ENCODE measurements at regions of chr1 and their contacts with region 1.

Region 1: DNA sequence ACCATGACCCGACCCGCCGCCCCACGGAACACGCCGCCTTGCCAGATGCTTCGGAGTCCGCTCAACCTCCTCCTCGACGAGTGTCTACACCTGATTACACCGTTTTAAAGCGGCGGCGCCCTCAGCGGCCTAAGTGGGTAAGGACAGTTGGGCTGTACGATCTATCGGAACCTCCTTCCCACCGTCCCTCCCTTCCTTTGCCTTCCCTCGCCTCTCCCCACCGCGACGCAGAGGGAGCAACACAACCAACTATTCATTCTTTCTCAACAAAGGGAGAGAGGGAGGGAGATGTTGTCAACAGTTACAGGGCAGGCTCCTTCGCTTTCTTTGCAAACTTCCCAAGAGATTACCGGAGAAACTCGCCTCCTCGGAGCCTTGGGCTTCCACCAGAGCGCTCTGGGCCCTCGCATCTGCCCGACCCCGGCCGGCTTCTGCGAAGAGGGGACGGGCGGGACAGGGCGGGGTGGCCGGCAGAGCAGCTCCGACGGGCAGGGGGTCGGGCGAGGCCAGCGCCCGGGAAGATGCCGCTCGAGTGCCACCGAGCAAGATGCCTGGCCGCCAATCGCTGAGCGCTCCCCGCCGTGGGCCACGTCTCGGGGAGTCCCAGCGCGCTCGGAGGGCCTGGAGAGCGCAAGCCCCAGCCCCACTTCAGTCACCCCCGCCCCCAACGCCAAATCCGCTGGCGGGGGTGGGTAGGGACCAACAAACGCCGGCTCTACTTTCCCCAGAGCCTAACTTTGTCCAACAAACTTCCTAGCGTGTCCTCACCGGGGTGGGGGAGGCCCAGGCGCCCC is 683 bp downstream of the BCAR3 start:
- DNase-seq: peak; percentile 72
- ATAC-seq: peak; percentile 92
- H3K4me3 ChIP-seq: peak overlapping the region; percentile 74 to 84 (median 76)
- H3K27ac ChIP-seq: peak overlapping the region; percentile 47
- H3K4me1 ChIP-seq: peaks cover 48% of the 10 kb centered on the region
- H3K27me3 ChIP-seq: no peaks in the 10 kb centered on the region
- CTCF ChIP-seq: peak; percentile 85
- EP300 ChIP-seq: no peak
- POLR2A ChIP-seq: no peak
- RAD21 ChIP-seq: peak; percentile 46; the same call in 1 of the 2 replicates

Region 2: DNA sequence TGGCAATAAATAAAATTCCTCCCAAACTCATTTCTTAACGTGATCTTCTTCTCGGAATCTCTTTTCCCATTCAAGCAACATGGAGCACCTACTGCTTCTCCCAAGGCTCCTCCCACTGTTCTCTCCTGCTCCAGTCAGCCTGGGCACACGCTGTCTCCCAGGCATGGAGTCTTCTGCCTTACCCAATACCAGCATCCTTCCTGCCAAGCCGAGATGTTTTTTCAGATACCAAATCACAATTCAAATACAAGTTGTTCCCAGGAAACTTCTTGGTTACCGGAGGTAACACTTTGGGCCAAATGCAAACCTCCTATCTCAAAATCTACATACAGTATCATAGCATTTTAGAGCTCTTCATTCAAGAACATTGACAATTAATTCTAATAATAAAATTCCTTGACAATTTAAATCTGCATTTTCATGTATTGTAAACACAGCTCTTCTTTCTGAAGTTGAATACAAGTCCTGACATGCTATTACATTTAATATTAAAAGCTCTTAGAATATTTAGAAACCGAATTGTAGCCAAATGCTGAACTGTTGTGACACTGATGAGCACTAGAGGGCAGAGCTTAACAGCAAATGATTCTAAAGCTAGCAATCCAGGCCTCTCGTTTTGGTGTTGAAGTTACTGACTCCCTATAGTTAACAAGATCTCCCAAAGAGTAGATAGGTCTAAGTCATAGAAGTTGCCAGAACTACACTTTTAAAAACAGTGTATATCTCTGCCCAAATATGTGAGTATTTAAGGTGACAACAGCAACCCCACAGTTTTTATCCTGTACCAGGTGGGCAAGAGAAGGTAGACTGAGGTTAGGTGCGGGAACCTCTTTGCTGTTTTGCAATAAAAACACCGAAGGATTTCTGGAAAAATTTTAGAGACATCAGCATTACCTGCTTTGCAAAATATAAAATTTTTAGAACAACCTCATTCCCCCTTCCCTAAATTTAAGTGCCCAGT is 51.6 kb before region 1 on chr1:
- CTCF ChIA-PET with region 1: interaction called, 9 read pairs
- POLR2A ChIA-PET with region 1: no interaction called
- in situ Hi-C with region 1: no loop called
- intact Hi-C with region 1: loop called (anchors 1 kb)
- DNase-seq: peak; percentile 65
- ATAC-seq: peak; percentile 71
- H3K4me3 ChIP-seq: no peak overlapping the region
- H3K27ac ChIP-seq: no peak overlapping the region
- H3K4me1 ChIP-seq: peaks cover 26% of the 10 kb centered on the region
- H3K27me3 ChIP-seq: no peaks in the 10 kb centered on the region
- CTCF ChIP-seq: peak; percentile 84
- EP300 ChIP-seq: no peak
- POLR2A ChIP-seq: no peak
- RAD21 ChIP-seq: peak; percentile 89

Region 3: DNA sequence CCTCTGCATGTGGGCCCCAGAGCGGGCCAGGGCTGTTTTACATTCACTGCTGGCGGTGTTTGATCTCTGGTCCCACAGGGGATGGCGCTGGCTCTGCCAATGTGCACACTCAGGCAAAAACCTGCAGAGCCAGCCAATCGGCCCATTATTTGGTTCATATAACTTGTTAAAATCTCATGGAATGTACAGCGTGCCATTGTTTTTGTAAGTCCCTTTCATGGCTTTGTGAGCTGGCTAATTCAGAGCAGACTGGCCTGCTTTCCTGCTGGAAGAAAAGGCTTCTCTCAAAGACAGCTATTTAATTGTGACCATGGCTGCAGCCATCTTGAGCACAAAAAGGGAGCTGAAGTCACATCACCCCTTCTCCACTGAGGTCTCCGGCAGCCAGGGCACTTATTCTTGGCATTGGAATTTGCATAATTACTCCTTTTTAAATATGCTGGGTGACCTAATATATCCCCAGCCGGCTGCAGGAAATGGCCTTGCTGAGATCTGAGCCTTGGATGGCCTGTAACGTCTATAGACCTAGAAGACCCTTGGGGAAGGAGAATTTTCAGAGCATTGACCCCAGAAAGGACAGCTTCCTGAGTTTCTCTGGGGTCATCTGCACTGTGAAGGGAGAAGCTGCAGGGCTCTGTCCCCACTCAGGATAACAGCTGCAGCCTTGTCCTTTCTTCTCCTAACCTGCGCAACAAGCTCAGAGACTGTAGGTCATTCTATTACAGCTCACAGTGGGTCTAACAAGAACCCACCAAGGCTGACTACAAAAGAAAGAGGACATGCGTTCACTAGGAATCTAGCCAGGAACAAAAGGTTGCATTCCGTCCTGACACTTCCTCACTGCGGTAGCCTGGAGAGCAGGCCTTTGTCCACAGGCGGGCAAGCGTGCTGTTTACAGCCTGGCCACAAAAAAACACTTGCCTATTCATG is 45.1 kb before region 1 on chr1:
- CTCF ChIA-PET with region 1: interaction called, 7 read pairs
- POLR2A ChIA-PET with region 1: no interaction called
- in situ Hi-C with region 1: loop called (anchors 5 kb)
- intact Hi-C with region 1: loop called (anchors 1 kb)
- DNase-seq: no peak
- ATAC-seq: no peak
- H3K4me3 ChIP-seq: no peak overlapping the region
- H3K27ac ChIP-seq: no peak overlapping the region
- H3K4me1 ChIP-seq: peaks cover 14% of the 10 kb centered on the region
- H3K27me3 ChIP-seq: no peaks in the 10 kb centered on the region
- CTCF ChIP-seq: no peak
- EP300 ChIP-seq: no peak
- POLR2A ChIP-seq: no peak
- RAD21 ChIP-seq: no peak

Region 4: GRCh38 chr1:93734999-93735398 is 54.0 kb after region 1 on chr1:
- CTCF ChIA-PET with region 1: no interaction called
- POLR2A ChIA-PET with region 1: no interaction called
- in situ Hi-C with region 1: no loop called
- intact Hi-C with region 1: loop called (anchors 10 kb)
- DNase-seq: peak; percentile 41
- ATAC-seq: peak; percentile 90
- H3K4me3 ChIP-seq: no peak overlapping the region
- H3K27ac ChIP-seq: no peak overlapping the region
- H3K4me1 ChIP-seq: peaks cover 21% of the 10 kb centered on the region
- H3K27me3 ChIP-seq: no peaks in the 10 kb centered on the region
- CTCF ChIP-seq: peak; percentile 51
- EP300 ChIP-seq: no peak
- POLR2A ChIP-seq: no peak
- RAD21 ChIP-seq: peak; percentile 47; the same call in 1 of the 2 replicates

Region 5: DNA sequence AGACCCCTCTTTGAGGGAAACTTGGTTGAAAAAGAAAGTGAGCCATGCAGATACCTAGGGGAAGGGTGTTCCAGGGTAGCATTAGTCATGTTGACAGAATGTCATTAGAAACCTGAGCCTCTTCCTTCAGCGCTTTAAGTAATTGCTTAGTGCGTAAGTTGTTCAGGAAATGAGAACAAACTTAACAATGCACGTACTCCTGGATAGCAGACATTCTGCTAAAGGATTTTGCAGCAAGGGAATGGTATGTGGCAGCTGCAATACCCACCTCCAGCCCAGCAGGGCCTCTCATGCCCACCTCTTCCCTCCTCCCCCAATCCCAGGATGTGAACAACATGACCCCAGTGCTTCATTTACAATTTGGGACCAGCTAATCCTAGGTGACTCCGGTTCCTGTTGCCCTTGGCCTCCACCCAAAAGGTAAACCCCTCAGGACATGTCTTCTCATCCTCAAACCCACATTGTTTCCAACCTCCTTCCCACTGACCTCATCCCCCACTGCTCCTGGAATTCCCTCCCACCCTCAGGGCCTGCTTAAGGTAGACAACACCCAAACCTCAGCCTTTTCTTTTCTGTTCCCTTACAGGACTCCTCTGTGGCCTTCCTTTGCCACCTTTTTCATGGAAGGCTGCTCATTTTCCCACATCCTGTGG is 98.7 kb after region 1 on chr1:
- CTCF ChIA-PET with region 1: no interaction called
- POLR2A ChIA-PET with region 1: no interaction called
- in situ Hi-C with region 1: no loop called
- intact Hi-C with region 1: no loop called
- DNase-seq: no peak
- ATAC-seq: no peak
- H3K4me3 ChIP-seq: no peak overlapping the region
- H3K27ac ChIP-seq: no peak overlapping the region
- H3K4me1 ChIP-seq: peaks cover 38% of the 10 kb centered on the region
- H3K27me3 ChIP-seq: no peaks in the 10 kb centered on the region
- CTCF ChIP-seq: no peak
- EP300 ChIP-seq: no peak
- POLR2A ChIP-seq: no peak
- RAD21 ChIP-seq: no peak

Region 6: GRCh38 chr1:93814059-93814794 is 133.3 kb after region 1 on chr1:
- CTCF ChIA-PET with region 1: no interaction called
- POLR2A ChIA-PET with region 1: no interaction called
- in situ Hi-C with region 1: no loop called
- intact Hi-C with region 1: loop called (anchors 1 kb)
- DNase-seq: peak; percentile 79
- ATAC-seq: peak; percentile 84
- H3K4me3 ChIP-seq: no peak overlapping the region
- H3K27ac ChIP-seq: no peak overlapping the region
- H3K4me1 ChIP-seq: peaks cover 30% of the 10 kb centered on the region
- H3K27me3 ChIP-seq: no peaks in the 10 kb centered on the region
- CTCF ChIP-seq: peak; percentile 99
- EP300 ChIP-seq: no peak; a peak in 1 of 4 replicates
- POLR2A ChIP-seq: no peak
- RAD21 ChIP-seq: peak; percentile 98

Region 7: DNA sequence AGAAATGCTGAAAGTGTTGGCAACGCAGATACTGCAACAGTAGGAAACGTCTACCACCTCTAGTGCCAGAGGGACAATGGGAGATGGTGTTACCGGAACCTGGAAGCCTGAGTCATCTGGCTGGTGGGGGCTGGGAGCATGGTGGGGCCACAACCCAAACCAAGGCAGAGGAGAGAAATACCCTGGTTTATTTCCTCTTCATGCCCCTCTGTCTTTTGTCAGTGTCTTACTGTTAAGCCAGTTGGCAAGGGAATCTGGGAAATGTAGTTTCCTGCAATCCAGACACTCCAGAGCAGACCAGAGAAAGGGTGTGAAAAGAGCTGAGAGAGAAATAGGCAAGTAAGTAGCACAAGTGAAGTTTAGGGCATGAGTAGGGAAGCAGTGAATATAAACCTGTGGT is 183.2 kb after region 1 on chr1:
- CTCF ChIA-PET with region 1: no interaction called
- POLR2A ChIA-PET with region 1: no interaction called
- in situ Hi-C with region 1: no loop called
- intact Hi-C with region 1: no loop called
- DNase-seq: no peak
- ATAC-seq: no peak
- H3K4me3 ChIP-seq: no peak overlapping the region
- H3K27ac ChIP-seq: no peak overlapping the region
- H3K4me1 ChIP-seq: no peaks in the 10 kb centered on the region
- H3K27me3 ChIP-seq: no peaks in the 10 kb centered on the region
- CTCF ChIP-seq: no peak
- EP300 ChIP-seq: no peak
- POLR2A ChIP-seq: no peak
- RAD21 ChIP-seq: no peak